Caco-2 (cell line): ENCODE measurements at regions of chr9 and their contacts with region 1.

Region 1: GRCh38 chr9:27529316-27530278 is at the start of gene MOB3B:
- DNase-seq: peak; percentile 56 to 73
- H3K4me3 ChIP-seq: peak within 1 kb of the TSS; percentile 58
- H3K4me3 Mint-ChIP-seq: peak within 1 kb of the TSS; percentile 75
- H3K27ac Mint-ChIP-seq: peak within 1 kb of the TSS; percentile 57
- H3K4me1 ChIP-seq: no peaks in the 10 kb centered on the region
- H3K4me1 Mint-ChIP-seq: no peaks in the 10 kb centered on the region
- H3K27me3 ChIP-seq: no peaks in the 10 kb centered on the region
- H3K27me3 Mint-ChIP-seq: no peaks in the 10 kb centered on the region
- CTCF ChIP-seq: peak; percentile 45 to 57
- total RNA-seq, gene MOB3B: 4.7 and 5.3 TPM in 2 replicates

Region 2: DNA sequence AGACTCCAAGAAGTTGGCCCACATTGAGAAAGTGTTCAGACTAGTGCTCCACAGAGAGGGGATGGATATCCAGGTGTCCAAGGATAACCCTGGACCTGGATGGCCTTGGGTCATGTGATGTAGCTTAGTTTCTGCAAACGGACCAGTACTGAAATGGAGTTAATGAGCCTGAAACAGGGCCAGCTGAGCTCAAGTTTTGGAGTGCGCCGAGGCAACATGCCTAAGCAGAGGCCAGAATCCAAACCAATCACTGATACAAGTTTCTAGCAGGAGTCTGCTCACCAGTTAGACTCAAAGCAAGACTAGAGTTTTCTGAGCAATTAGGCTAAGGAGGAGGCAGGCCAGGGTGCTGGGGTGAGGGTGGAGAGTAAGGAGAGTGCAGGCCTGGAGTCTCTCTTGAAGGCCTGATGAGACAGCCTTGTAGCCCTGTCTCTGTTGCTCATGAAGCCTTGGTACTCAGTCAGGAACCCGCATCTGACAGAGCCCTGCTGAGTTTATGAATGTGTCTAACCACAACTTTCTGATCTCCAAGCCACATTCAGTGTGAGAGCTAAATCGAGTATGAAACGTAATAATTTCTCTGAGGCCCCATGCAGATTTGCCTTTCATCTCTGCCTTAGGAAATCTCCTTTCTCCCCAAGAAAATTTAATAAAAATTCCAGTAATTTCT is 163.8 kb before region 1 on chr9:
- CTCF ChIA-PET with region 1: no interaction called
- POLR2A ChIA-PET with region 1: no interaction called
- intact Hi-C with region 1: loop called (anchors 5 kb)
- DNase-seq: no peak
- H3K4me3 ChIP-seq: no peak overlapping the region
- H3K4me3 Mint-ChIP-seq: no peak overlapping the region
- H3K27ac Mint-ChIP-seq: peak overlapping the region; percentile 55
- H3K4me1 ChIP-seq: peaks cover 51% of the 10 kb centered on the region
- H3K4me1 Mint-ChIP-seq: peaks cover 41% of the 10 kb centered on the region
- H3K27me3 ChIP-seq: no peaks in the 10 kb centered on the region
- H3K27me3 Mint-ChIP-seq: no peaks in the 10 kb centered on the region
- CTCF ChIP-seq: no peak

Region 3: DNA sequence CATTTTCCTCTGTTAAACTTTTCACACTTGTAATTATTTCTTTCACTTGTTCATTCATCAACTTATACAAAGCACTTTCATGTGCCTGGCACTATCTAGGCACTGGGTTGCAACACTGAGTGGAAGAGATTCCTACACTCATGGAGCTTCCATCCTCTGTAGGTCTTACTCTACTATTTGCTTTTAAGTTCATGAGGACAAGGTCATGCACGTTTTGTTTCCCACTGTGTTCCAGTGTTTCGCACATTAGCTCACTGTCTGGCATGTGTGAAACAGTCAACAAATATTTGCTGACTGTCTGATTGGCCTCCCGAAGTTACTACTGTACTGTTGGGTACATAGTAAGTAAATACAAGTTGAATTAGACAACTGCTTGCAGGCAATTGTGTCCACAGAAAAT is 93.4 kb before region 1 on chr9:
- CTCF ChIA-PET with region 1: no interaction called
- POLR2A ChIA-PET with region 1: no interaction called
- intact Hi-C with region 1: loop called (anchors 2 kb)
- DNase-seq: peak; percentile 47 to 48
- H3K4me3 ChIP-seq: no peak overlapping the region
- H3K4me3 Mint-ChIP-seq: no peak overlapping the region
- H3K27ac Mint-ChIP-seq: no peak overlapping the region
- H3K4me1 ChIP-seq: peaks cover 56% of the 10 kb centered on the region
- H3K4me1 Mint-ChIP-seq: peaks cover 45% of the 10 kb centered on the region
- H3K27me3 ChIP-seq: no peaks in the 10 kb centered on the region
- H3K27me3 Mint-ChIP-seq: no peaks in the 10 kb centered on the region
- CTCF ChIP-seq: no peak

Region 4: DNA sequence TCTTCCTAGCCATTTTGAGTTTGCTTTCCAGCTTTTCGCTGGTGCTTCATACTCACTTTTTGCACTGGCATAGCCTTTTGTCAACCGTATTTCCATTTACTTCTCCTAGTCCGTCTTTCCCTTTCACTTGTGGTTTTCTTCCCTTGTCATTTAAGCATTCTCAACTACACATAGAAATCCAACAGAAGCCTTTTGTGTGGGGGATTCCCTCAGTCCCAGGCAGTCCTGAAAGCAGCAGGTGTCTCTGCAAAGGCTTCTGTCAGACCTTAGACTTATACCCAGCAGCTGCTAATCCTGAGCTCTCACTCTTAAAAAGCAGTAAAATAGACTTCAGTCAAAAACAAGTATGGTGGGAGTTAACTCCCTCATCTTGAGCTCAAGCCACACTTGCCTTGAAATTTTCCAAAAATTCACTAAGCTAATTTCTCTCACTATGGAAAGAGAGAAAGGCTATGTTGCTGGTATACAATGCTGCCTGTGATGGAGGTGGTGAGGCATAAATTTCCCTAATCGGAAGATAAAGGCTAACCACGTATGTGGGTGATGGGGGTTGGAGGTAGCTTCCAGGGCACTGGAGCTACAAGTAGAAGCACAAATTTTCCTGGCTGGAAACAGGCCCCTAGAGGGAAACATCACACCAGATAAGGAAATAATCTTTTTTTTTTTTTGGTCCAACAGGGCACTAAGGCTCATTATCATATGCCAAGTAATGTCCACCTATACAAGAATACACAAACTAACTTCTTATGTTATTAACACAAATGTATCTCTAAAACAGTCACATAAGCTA is 40.3 kb before region 1 on chr9:
- CTCF ChIA-PET with region 1: no interaction called
- POLR2A ChIA-PET with region 1: no interaction called
- intact Hi-C with region 1: loop called (anchors 5 kb)
- DNase-seq: no peak
- H3K4me3 ChIP-seq: no peak overlapping the region
- H3K4me3 Mint-ChIP-seq: no peak overlapping the region
- H3K27ac Mint-ChIP-seq: no peak overlapping the region
- H3K4me1 ChIP-seq: 0 out of 2 replicates have a peak, but pooled peaks cover 5% of the 10 kb centered on the region
- H3K4me1 Mint-ChIP-seq: peaks cover 14% of the 10 kb centered on the region
- H3K27me3 ChIP-seq: no peaks in the 10 kb centered on the region
- H3K27me3 Mint-ChIP-seq: no peaks in the 10 kb centered on the region
- CTCF ChIP-seq: no peak

Region 5: DNA sequence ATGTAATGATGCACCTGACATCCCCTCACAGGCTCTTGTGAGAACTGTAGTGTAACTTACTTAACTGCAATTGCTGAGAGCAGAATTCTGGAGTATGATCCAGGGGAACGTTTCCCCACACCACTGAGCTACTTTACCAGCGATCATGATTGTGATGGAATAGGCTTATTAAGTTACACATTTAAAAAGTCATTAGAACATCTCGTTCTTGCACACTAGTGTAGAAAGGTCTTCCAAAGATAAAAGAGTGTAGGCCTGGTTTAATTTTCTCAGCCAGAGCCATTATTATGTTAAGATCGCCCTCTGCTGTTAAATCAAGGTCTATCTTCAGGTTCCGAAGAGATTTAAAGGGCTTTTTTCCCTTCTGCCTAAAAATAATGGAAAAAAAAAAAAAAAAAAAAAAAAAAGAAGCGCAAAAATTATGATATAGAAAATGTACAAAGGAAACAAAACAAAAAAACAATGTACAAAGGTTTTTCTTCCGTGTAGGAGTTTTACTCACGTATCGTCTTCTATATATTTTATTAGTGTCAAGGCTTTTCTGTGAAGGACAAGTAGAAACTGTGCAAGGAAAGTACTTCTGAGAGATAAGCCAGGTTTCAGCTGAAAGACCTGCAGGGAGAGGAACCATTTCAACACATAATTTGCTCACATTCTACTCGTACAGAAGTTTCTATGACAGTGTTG is 18.6 kb after region 1 on chr9:
- CTCF ChIA-PET with region 1: no interaction called
- POLR2A ChIA-PET with region 1: no interaction called
- intact Hi-C with region 1: loop called (anchors 2 kb)
- DNase-seq: no peak
- H3K4me3 ChIP-seq: no peak overlapping the region
- H3K4me3 Mint-ChIP-seq: no peak overlapping the region
- H3K27ac Mint-ChIP-seq: no peak overlapping the region
- H3K4me1 ChIP-seq: no peaks in the 10 kb centered on the region
- H3K4me1 Mint-ChIP-seq: no peaks in the 10 kb centered on the region
- H3K27me3 ChIP-seq: no peaks in the 10 kb centered on the region
- H3K27me3 Mint-ChIP-seq: no peaks in the 10 kb centered on the region
- CTCF ChIP-seq: peak in 1 of 2 experiments; percentile 29

Region 6: GRCh38 chr9:27726244-27727081 is 196.9 kb after region 1 on chr9:
- CTCF ChIA-PET with region 1: no interaction called
- POLR2A ChIA-PET with region 1: no interaction called
- intact Hi-C with region 1: no loop called
- DNase-seq: peak; percentile 32 to 34
- H3K4me3 ChIP-seq: no peak overlapping the region
- H3K4me3 Mint-ChIP-seq: no peak overlapping the region
- H3K27ac Mint-ChIP-seq: no peak overlapping the region
- H3K4me1 ChIP-seq: no peaks in the 10 kb centered on the region
- H3K4me1 Mint-ChIP-seq: no peaks in the 10 kb centered on the region
- H3K27me3 ChIP-seq: no peaks in the 10 kb centered on the region
- H3K27me3 Mint-ChIP-seq: peaks cover 5% of the 10 kb centered on the region
- CTCF ChIP-seq: peak in 1 of 2 experiments; percentile 32